ENCODE measurements at regions of chr12 and their contacts with region 1.

Region 1: GRCh38 chr12:76144245-76144549 is 59.7 kb upstream of the NAP1L1 start:
- DNase-seq: peak in 30 of 35 experiments; percentile 3 to 52 (median 16)
- ATAC-seq: peak in 1 of 4 experiments; percentile 51
- H3K4me3 ChIP-seq: no peak overlapping the region
- H3K4me3 Mint-ChIP-seq: peak overlapping the region in 1 of 3 donors; percentile 38
- H3K27ac ChIP-seq: no peak overlapping the region
- H3K27ac Mint-ChIP-seq: no peak overlapping the region
- H3K4me1 ChIP-seq: peaks cover 12 to 14% of the 10 kb centered on the region in 2 experiments
- H3K4me1 Mint-ChIP-seq: peaks cover 23 to 24% (median 23%) of the 10 kb centered on the region in 3 donors
- H3K27me3 ChIP-seq: no peaks in the 10 kb centered on the region
- H3K27me3 Mint-ChIP-seq: no peaks in the 10 kb centered on the region

Region 2: DNA sequence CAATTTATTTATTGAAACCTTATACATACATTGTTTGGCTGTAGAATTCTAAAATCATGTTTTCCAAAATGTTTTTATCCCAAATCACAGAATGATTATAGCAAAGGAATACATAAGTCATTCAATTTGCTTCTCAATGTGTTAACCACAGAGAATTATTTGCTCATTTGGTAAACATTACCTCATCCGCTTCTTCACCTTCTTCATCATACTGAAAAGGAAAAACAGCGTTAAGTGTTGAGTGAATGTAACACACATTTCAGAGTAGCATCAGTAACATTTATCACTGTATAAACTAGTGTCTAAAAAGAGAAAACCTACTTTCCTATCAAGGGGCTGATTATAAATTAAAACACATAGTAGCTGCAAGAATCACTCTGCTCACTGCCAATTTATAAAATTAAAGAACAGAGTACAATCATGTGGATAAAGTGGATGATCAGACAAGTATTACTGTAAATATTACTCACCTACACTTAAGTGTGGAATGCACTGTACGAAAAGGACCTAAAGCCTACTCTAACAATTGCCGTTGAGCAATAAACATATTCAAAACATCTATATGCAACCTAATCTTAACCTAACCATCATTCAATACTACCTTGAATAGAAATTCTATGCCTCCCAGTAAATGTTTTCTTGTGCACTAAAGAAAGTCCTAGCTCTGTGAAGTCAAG is 94.5 kb before region 1 on chr12:
- CTCF ChIA-PET with region 1: interaction called in 1 of 2 experiments, 11 read pairs
- POLR2A ChIA-PET with region 1: no interaction called
- DNase-seq: no peak
- ATAC-seq: no peak
- H3K4me3 ChIP-seq: no peak overlapping the region
- H3K4me3 Mint-ChIP-seq: no peak overlapping the region
- H3K27ac ChIP-seq: no peak overlapping the region
- H3K27ac Mint-ChIP-seq: no peak overlapping the region
- H3K4me1 ChIP-seq: no peaks in the 10 kb centered on the region
- H3K4me1 Mint-ChIP-seq: no peaks in the 10 kb centered on the region
- H3K27me3 ChIP-seq: no peaks in the 10 kb centered on the region
- H3K27me3 Mint-ChIP-seq: no peaks in the 10 kb centered on the region